Activated CD4-positive, alpha-beta memory T cell treated with anti-CD3 and anti-CD28 coated beads for 36 hours (primary cell): ENCODE measurements at regions of chr19 and their contacts with region 1.

Region 1: GRCh38 chr19:17075035-17075863 is at the starts of genes HAUS8 and MYO9B:
- DNase-seq: peak; percentile 100
- H3K4me3 Mint-ChIP-seq: peak within 1 kb of the TSS; percentile 99
- H3K27ac Mint-ChIP-seq: peak within 1 kb of the TSS; percentile 99
- H3K4me1 Mint-ChIP-seq: peaks cover 48% of the 10 kb centered on the region
- H3K27me3 Mint-ChIP-seq: no peaks in the 10 kb centered on the region
- total RNA-seq, gene HAUS8: 34.9 to 36.8 TPM
- total RNA-seq, gene MYO9B: 100 to 104 TPM

Region 2: GRCh38 chr19:17090583-17090982 is 15.3 kb after region 1 on chr19:
- CTCF ChIA-PET with region 1: no interaction called
- POLR2A ChIA-PET with region 1: interaction called, 3 read pairs
- intact Hi-C with region 1: loop called (anchors 1 kb)
- DNase-seq: peak; percentile 67
- H3K4me3 Mint-ChIP-seq: no peak overlapping the region
- H3K27ac Mint-ChIP-seq: peak overlapping the region; percentile 70
- H3K4me1 Mint-ChIP-seq: peaks cover 33% of the 10 kb centered on the region
- H3K27me3 Mint-ChIP-seq: no peaks in the 10 kb centered on the region

Region 3: GRCh38 chr19:17125715-17126677 is 50.7 kb after region 1 on chr19:
- CTCF ChIA-PET with region 1: no interaction called
- POLR2A ChIA-PET with region 1: interaction called, 4 read pairs
- intact Hi-C with region 1: loop called (anchors 1 kb)
- DNase-seq: peak; percentile 82
- H3K4me3 Mint-ChIP-seq: peak overlapping the region; percentile 65
- H3K27ac Mint-ChIP-seq: peak overlapping the region; percentile 92
- H3K4me1 Mint-ChIP-seq: peaks cover 42% of the 10 kb centered on the region
- H3K27me3 Mint-ChIP-seq: no peaks in the 10 kb centered on the region

Region 4: DNA sequence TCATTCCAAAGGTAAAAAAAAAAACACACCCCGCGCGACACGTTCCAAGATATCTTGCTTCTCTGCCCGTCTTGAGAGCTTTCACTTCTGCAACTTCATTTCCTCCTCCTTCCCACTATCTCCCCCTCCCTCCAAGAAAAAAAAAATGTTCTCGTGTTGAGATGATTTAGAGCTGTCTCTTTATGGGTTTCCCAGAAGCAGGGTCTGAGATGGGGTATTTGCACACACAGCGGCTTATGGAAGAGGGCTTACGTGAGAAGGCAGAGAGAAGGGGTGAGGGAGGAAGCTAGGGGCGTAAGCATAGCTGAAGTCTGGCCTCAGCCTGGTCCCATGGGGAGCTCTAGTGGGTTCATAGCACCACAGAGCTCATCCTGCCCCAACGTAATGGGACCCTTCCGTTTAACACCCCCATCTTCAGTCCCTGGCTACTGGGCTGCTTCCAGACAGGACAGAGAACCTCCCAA is 108.6 kb after region 1 on chr19:
- CTCF ChIA-PET with region 1: interaction called, 7 read pairs
- POLR2A ChIA-PET with region 1: interaction called, 4 read pairs
- intact Hi-C with region 1: loop called (anchors 1 kb)
- DNase-seq: peak; percentile 32
- H3K4me3 Mint-ChIP-seq: peak overlapping the region; percentile 70
- H3K27ac Mint-ChIP-seq: peak overlapping the region; percentile 89
- H3K4me1 Mint-ChIP-seq: peaks cover 19% of the 10 kb centered on the region
- H3K27me3 Mint-ChIP-seq: no peaks in the 10 kb centered on the region

Region 5: DNA sequence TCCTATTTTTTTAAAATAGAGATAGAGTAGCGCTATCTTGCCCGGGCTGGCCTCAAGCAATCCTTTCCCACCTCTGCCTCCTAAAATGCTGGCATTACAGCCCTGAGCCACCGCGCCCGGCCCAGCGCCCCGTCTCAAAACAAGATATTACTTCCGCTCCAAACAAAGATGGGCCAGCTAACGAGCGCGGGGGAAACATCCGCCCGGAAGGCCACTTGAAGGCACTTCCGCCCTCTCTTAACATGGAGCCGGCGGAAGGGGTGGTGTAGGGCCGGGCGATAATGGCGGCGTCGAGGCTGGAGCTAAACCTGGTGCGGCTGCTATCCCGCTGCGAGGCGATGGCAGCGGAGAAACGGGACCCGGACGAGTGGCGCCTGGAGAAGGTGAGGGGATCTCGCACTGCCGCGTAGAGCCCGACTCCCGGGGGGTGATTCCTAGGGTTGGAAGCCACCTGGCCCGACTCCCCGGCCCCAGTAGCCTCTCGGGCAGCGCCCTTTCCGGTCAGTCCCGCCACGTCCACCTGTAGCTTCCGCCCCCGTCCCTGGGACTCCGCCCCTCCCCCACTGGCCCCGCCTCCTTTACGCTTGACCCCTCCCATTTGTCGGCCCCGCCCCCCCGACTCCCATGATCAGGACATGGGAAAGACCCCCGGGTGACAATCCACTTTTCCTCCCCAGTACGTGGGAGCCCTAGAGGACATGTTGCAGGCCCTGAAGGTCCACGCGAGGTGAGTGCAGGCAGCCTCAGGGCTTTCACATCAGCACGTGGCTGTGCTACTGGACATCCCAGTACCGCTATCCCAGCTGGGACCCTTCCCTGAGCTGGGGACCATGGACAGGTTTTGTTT is 140.1 kb after region 1 on chr19 and contains the start of gene USE1:
- CTCF ChIA-PET with region 1: no interaction called
- POLR2A ChIA-PET with region 1: interaction called, 4 read pairs
- intact Hi-C with region 1: loop called (anchors 1 kb)
- DNase-seq: peak; percentile 92
- H3K4me3 Mint-ChIP-seq: peak within 1 kb of the TSS; percentile 84
- H3K27ac Mint-ChIP-seq: peak within 1 kb of the TSS; percentile 96
- H3K4me1 Mint-ChIP-seq: peaks cover 16% of the 10 kb centered on the region
- H3K27me3 Mint-ChIP-seq: no peaks in the 10 kb centered on the region
- total RNA-seq, gene USE1: 24.6 to 28.5 TPM

Region 6: DNA sequence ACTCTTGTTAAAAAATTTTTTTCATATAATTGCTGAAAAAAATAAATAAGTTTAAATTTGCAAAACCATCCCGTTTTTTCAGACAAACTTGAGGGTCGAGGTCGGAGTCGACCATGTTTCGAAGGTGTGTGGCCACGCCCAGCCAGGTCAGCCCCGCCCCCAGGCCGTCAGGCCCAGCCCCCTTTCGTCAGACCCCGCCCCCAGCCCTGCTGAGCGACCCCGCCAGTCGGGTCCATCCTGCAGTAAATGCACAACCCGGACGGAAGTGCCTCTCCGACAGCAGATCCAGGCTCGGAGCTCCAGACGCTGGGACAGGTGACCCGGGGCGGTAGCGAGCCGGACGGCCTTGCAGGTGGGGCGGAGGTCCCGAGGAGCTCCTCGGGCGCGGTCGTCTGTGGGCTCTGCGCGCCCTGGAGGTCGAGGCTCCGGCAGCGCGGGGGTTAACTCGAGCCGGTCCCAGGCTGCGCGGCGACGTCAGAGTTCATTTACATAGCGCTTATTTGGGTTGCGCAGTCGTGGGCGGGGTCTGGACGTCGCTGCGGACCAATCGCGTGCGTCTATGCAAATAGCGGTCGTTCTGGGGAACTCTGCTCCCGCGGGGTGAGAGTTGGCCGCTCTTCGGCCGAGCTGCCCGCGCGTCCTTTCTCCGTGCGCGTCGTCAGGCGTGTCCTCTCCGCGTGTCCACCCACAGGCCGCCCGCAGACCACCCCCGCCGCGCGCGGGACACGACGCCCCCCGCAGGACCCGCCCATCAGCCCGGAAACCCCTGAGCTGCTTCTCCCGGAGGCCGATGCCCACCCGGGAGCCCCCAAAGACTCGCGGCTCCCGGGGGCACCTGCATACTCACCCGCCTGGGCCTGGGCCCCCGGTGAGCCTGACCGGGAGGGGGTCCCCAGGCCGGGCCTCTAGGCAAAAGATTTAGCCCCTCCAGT is 151.0 kb after region 1 on chr19 and contains the start of gene OCEL1:
- CTCF ChIA-PET with region 1: no interaction called
- POLR2A ChIA-PET with region 1: interaction called, 7 read pairs
- intact Hi-C with region 1: loop called (anchors 1 kb)
- DNase-seq: peak; percentile 98
- H3K4me3 Mint-ChIP-seq: peak within 1 kb of the TSS; percentile 91
- H3K27ac Mint-ChIP-seq: peak within 1 kb of the TSS; percentile 97
- H3K4me1 Mint-ChIP-seq: peaks cover 6% of the 10 kb centered on the region
- H3K27me3 Mint-ChIP-seq: no peaks in the 10 kb centered on the region
- total RNA-seq, gene OCEL1: 17.6 to 17.9 TPM

Region 7: DNA sequence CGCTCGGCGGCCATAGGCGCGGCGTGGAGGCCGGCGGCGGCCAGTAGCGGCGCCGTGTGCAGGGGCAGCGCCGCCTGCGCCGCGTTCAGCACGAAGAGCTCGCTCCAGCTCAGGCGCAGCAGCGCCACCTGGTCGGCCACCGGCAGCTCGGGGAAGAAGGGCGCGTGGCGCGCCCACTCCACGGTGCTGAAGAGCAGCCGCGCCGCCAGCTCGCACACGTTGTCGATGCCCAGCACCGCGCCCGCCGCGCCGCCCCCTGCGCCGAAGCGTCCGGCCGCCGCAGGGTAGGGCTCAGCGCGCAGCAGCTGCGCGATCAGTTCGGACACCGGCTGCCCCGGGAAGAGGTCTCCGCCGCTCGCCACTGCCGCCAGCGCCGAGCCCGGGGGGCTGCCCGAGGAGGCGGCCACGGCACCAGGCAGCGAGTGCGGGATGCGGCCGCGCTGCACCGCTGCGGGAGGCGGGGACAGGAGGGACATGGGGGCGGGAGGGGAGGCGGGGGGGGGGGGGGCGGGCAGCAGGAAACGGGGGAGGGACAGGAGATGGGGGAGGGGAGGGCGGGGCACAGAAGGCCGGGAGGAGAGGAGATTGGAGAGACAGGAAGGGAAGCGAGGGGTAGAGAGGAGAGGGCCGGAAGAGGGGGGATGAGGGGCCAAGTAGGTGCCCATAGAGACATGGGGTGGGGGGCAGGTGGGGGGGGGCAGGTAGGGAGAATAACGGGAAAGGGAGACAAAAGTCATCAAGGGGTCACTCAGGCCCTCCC is 160.5 kb after region 1 on chr19:
- CTCF ChIA-PET with region 1: interaction called, 5 read pairs
- POLR2A ChIA-PET with region 1: interaction called, 4 read pairs
- intact Hi-C with region 1: loop called (anchors 2 kb)
- DNase-seq: peak; percentile 82
- H3K4me3 Mint-ChIP-seq: peak overlapping the region; percentile 84
- H3K27ac Mint-ChIP-seq: peak overlapping the region; percentile 79
- H3K4me1 Mint-ChIP-seq: peaks cover 10% of the 10 kb centered on the region
- H3K27me3 Mint-ChIP-seq: no peaks in the 10 kb centered on the region